Activated naive CD4-positive, alpha-beta T cell treated with anti-CD3 and anti-CD28 coated beads for 36 hours (primary cell): ENCODE measurements at regions of chr6 and their contacts with region 1.

Region 1: DNA sequence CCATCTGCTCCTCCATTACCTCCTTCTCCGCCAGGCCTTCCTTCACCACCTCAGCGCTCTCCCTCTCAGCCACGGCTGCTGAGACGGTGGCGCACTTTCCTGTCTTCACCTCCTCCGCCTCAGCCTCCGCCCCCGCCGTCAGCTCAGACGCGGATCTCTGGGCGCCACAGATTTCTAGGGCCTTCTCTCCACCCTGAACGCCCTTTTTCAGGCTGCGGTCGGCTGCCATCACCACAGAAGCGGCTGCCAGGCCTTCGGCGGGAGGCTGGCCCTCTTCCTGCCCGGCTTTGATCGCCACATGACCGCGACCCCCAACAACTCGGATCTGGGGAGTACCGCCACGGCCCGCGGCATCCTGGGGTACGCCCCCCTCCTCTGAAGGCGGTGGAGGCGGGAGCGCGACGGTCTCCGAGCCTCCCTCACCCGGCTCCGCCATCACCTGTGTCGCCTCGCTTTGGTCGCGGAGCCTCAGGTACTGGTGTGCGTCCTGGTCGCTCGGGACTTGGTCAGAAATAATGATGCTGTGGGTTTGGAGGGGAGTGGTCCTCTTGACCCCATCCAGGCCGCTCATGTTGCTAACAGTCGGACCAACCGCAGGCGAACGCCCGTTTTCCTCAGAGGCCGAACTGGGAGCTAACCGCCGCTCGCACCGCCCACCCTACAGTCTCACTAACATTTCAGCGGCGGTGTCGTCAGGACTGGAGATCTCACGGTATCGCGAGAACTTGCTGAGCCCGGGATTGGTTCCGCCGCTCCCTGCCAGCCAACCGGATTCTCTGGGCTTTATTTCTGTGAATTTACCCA is at the start of gene TSPYL1:
- DNase-seq: peak; percentile 97
- H3K4me3 Mint-ChIP-seq: peak within 1 kb of the TSS; percentile 93
- H3K27ac Mint-ChIP-seq: peak within 1 kb of the TSS; percentile 96
- H3K4me1 Mint-ChIP-seq: peaks cover 36% of the 10 kb centered on the region
- H3K27me3 Mint-ChIP-seq: no peaks in the 10 kb centered on the region
- total RNA-seq, gene TSPYL1: 33.4 to 34.7 TPM

Region 2: GRCh38 chr6:116253505-116254296 is 25.8 kb before region 1 on chr6 and contains the start of gene TSPYL4:
- CTCF ChIA-PET with region 1: interaction called, 4 read pairs
- intact Hi-C with region 1: loop called (anchors 1 kb)
- DNase-seq: peak; percentile 95
- H3K4me3 Mint-ChIP-seq: no peak within 1 kb of the TSS
- H3K27ac Mint-ChIP-seq: no peak within 1 kb of the TSS
- H3K4me1 Mint-ChIP-seq: peaks cover 35% of the 10 kb centered on the region
- H3K27me3 Mint-ChIP-seq: no peaks in the 10 kb centered on the region
- total RNA-seq, gene TSPYL4: 7.8 to 8.0 TPM

Region 3: DNA sequence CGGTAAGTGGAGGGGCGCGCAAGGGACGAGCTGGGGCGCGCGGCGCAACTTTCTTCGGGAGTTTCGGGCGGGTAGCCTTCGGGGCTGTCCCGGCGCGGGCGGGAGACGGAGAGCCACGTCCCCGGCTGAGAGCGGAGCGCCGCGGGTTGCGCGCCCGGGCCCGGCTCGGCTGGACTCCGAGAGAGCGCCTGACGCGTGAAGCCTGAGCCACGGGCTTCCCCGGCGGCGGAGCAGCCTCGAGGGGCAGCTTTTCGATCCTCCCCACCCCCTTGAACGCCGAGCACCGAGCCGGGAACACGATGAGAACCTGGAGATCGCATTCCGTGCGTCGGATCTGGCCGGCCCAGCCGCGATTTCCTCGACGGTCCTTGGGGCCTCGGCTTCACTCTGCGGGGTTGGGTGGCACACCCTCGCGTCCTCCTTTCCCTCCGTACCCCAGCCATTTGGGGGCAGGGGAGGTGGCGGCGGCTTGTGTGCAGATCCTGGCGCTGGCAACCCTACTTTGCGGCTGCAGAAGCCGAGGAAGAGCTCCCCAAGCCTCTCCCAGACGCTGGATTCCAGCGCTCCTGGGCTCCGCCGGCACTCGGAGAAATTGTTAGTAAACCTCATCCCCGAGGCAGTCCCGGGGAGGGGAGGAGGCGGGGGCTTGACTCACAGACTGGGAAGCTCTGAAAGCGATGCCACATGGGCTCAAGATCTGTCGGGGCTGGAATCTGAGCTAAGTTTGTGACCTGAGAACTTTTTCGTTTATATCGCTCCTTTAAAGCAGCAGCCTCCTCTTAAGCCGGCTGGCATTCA is 91.9 kb after region 1 on chr6:
- CTCF ChIA-PET with region 1: no interaction called
- intact Hi-C with region 1: loop called (anchors 2 kb)
- DNase-seq: peak; percentile 43
- H3K4me3 Mint-ChIP-seq: peak overlapping the region; percentile 71
- H3K27ac Mint-ChIP-seq: no peak overlapping the region
- H3K4me1 Mint-ChIP-seq: peaks cover 8% of the 10 kb centered on the region
- H3K27me3 Mint-ChIP-seq: peaks cover 24% of the 10 kb centered on the region

Region 4: DNA sequence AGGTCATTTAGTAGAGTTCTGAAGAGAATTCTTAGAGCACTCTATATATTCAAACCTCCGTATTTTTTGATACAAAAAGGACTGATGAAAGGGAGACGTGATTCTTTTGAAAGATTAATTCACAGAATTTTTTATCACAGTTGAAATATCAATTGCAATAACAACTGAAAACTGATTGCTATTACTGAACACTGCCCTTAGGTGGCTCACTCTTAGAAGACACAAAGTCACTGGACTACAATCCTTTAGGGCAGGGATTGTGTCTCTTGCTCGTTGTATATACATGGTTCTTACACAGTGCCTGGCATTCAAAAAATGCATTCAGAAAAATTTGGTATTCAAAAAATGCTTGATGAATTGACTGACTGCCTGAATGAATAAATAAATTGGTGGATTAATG is 164.6 kb after region 1 on chr6:
- CTCF ChIA-PET with region 1: no interaction called
- intact Hi-C with region 1: no loop called
- DNase-seq: no peak
- H3K4me3 Mint-ChIP-seq: no peak overlapping the region
- H3K27ac Mint-ChIP-seq: no peak overlapping the region
- H3K4me1 Mint-ChIP-seq: peaks cover 2% of the 10 kb centered on the region
- H3K27me3 Mint-ChIP-seq: peaks cover 16% of the 10 kb centered on the region

Region 5: DNA sequence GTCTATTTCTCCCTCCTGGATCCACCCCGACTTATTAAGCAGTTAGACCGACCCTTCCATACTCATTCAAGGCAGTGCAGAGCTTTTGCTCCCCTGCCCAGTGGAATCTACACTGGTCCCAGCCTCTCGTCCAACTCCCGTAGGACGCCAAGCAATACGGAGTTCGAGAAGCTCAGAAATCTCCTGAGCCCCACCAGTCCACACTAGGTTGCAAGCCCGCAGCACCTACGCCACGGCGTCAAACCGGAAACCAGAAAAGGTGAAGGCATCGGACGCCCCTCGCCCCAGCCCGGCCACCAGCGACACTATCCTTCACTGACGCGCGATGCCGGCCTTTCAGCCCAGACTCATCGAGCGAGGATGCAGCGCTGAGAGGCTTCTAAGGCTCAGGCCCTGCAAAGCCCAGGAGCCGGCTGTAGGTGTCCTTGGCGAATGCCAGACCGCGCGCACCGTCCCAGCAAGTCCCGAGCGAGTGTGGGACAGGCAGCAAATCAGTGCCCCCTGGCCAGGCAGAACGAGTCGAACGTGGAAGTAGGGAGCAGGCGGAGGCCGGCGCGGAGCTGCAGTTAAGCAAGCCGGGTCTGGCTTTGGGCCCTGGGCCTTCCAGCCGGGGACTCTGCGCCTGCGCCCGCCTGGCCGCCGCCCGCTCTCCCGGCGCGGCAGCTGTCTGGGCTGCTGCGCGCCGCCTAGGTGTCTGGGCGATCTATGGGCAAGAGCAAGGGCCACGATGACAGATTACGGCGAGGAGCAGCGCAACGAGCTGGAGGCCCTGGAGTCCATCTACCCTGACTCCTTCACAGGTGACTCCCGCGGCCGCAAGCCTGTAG is 291.6 kb after region 1 on chr6 and contains the start of gene RWDD1:
- CTCF ChIA-PET with region 1: no interaction called
- intact Hi-C with region 1: loop called (anchors 1 kb)
- DNase-seq: peak; percentile 99
- H3K4me3 Mint-ChIP-seq: peak within 1 kb of the TSS; percentile 93
- H3K27ac Mint-ChIP-seq: peak within 1 kb of the TSS; percentile 88
- H3K4me1 Mint-ChIP-seq: peaks cover 49% of the 10 kb centered on the region
- H3K27me3 Mint-ChIP-seq: no peaks in the 10 kb centered on the region
- total RNA-seq, gene RWDD1: 47.8 to 50.3 TPM

Region 6: DNA sequence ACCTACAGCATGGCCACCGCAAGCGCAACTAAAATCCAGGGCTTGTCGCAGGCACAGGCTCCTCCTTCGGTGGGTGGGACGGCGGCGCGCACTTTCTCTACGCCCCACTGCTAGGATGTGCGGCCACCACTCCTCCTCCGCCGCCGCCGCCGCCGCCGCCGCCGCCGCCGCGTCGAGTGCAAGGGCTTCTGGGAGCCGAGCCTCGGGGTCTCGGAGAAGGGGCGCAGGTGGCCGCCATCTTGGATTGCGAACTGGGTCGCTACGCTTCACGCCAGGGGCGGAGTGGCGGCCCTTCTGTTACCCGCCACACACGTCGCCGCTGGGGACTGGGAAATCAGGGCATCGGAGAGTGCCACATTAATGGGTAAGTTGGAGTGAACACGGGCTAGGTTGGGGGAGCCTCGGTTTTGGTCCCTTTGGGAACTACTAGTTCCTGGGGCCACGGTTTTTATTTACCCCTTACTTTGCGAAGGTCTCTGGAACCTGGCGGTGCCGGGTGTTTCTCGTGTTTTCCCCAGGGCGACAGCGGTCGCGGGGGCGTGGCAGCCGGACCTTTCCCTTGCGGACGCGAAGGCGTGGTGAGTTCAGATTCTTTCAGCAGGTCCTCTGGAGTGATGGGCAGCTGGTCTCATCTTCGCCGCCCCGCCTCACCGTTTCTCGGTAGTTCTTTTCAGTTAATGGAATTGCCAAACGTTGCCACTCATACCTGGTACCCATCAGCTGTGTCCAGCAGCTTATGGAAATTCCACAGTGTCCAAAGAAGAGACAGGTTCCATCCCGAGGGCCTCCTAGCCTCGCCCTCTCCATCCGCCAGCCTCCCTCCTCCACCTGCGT is 401.7 kb after region 1 on chr6 and contains the start of gene KPNA5:
- CTCF ChIA-PET with region 1: no interaction called
- intact Hi-C with region 1: loop called (anchors 1 kb)
- DNase-seq: peak; percentile 94
- H3K4me3 Mint-ChIP-seq: peak within 1 kb of the TSS; percentile 96
- H3K27ac Mint-ChIP-seq: peak within 1 kb of the TSS; percentile 97
- H3K4me1 Mint-ChIP-seq: peaks cover 43% of the 10 kb centered on the region
- H3K27me3 Mint-ChIP-seq: no peaks in the 10 kb centered on the region
- total RNA-seq, gene KPNA5: 8.4 to 8.9 TPM